Activated CD8-positive, alpha-beta T cell treated with anti-CD3 and anti-CD28 coated beads, Interleukin-2, amount 10 ng/mL, durations not matched to agents 7 days and 5 days (primary cell): ENCODE measurements at regions of chr19 and their contacts with region 1.

Region 1: DNA sequence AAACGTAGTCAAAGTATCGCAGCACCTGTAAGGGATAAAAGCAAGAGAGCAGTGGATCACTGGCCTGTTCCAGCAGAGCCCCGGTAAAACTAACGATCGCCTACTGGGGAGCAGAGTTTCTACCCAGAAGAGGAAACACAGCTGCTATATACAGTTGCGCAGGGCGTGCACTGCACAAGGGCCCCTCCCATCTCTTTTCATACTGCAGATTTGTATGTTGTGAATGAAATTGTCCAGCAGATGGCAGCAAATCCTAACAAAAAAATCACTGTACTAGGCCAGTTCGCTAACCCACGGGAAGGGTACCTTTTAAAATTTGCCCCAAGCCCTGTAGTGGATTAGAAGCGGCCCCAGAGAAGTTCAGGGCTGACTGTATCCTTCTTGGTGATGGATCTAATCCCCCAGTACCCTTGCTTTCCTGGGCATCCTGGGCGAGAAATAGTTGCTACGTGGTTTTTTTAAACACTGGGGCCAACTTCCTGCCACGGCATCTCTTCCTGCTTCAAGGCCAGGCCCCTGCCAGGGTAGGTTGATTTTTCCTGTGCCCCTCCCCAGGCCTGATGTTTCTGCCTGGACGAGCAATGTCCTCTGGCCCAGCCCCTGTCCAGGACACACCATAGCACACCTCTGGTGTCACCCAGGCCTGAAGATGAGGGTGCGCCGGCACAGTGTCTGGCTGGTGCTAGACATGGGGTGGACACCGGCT is 127.0 kb downstream of the IER2 start:
- DNase-seq: peak; percentile 85
- ATAC-seq: peak; percentile 89
- H3K4me3 Mint-ChIP-seq: peak overlapping the region; percentile 57
- H3K27ac Mint-ChIP-seq: peak overlapping the region; percentile 90
- H3K4me1 Mint-ChIP-seq: peaks cover 23% of the 10 kb centered on the region
- H3K27me3 Mint-ChIP-seq: no peaks in the 10 kb centered on the region

Region 2: DNA sequence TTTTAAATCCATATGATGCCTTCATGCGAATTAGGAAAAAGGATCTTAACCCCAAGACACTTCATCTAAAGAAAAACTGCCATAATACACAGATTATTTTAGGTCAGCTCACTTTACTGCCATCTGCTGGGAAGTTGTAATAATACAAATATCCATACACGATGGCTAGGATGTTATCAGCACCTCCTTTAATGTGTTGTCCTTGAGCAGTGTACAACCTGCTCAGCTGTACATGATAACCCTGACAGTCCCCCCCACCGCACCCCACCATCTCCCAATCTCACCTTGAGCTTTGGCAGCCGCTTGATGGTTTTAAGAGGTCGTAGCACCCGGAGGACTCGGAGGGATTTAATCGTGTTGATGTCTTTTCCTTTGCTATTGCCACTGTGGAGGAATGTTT is 14.8 kb before region 1 on chr19:
- CTCF ChIA-PET with region 1: interaction called, 13 read pairs
- POLR2A ChIA-PET with region 1: no interaction called
- DNase-seq: no peak
- ATAC-seq: peak; percentile 57
- H3K4me3 Mint-ChIP-seq: no peak overlapping the region
- H3K27ac Mint-ChIP-seq: no peak overlapping the region
- H3K4me1 Mint-ChIP-seq: peaks cover 16% of the 10 kb centered on the region
- H3K27me3 Mint-ChIP-seq: peaks cover 15% of the 10 kb centered on the region

Region 3: DNA sequence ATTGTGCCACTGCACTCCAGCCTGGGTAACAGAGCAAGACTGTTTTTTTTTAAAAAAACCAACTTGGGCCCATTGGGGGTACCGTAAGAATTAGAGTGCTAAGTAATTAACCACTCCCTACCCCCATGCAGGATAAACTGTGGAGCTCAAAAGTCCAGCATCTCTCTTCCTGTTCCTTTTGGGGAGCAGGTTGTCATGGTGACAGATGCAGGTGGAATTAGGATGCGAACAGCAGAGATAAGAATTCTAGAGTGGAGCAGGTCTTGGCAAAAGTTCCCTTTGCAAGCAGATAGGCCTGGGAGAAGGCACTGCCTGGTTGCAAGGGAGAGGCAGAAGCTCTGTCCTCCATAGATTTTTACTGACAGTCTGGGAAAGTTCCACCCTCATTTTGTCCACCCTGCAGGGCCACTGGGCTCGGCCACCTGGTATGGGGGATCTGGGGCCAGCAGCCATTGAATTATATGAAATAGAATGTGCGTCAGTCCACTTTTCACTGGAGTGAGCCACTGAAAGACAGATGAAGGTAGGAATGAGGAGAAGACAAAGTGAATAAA is 14.6 kb after region 1 on chr19:
- CTCF ChIA-PET with region 1: interaction called, 23 read pairs
- POLR2A ChIA-PET with region 1: interaction called, 3 read pairs
- DNase-seq: no peak
- ATAC-seq: no peak
- H3K4me3 Mint-ChIP-seq: no peak overlapping the region
- H3K27ac Mint-ChIP-seq: no peak overlapping the region
- H3K4me1 Mint-ChIP-seq: no peaks in the 10 kb centered on the region
- H3K27me3 Mint-ChIP-seq: no peaks in the 10 kb centered on the region

Region 4: GRCh38 chr19:13339869-13340268 is 62.6 kb after region 1 on chr19:
- CTCF ChIA-PET with region 1: no interaction called
- POLR2A ChIA-PET with region 1: no interaction called
- DNase-seq: no peak
- ATAC-seq: no peak
- H3K4me3 Mint-ChIP-seq: no peak overlapping the region
- H3K27ac Mint-ChIP-seq: no peak overlapping the region
- H3K4me1 Mint-ChIP-seq: no peaks in the 10 kb centered on the region
- H3K27me3 Mint-ChIP-seq: no peaks in the 10 kb centered on the region

Region 5: DNA sequence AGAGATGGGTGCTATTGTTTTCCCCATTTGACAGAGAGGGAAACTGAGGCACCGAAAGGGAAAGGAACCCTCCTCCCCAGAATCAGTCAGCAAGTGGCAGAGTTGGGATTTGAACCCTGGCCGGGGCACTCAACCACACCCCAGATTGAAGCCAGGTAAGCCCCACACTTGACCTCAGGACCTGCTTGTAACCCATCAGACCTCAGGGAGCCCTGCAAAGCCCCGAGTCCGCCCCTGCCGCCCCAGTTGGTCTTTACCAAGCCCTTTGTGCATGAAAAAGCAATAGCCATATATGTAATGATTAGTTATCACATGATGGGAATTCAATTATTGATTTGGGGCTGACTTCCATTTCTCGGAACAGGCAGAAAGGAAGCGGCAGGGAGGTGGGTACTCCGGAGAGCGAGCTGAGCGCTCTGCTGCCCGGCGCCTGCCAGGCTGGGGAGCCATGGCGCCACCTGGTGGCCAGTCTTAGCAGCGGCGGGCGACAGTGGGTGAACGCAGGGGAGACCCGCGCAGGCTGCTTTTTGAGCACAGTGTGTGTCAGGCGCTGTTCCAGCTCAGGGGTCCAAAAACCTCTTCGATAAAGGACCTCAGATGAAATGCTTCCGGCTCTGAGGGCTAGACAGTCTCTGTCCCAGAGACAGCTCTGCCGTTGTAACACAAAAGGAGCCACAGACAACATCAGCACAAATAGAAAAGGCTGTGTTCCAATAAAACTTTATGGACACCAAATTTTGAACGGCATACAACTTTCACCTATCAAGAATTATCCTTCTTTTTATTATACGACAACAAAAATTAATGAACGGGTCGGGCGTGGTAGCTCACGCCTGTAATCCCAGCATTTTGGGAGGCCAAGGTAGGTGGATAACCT is 311.9 kb after region 1 on chr19:
- CTCF ChIA-PET with region 1: interaction called, 48 read pairs
- POLR2A ChIA-PET with region 1: no interaction called
- DNase-seq: peak; percentile 85
- ATAC-seq: peak; percentile 95
- H3K4me3 Mint-ChIP-seq: no peak overlapping the region
- H3K27ac Mint-ChIP-seq: no peak overlapping the region
- H3K4me1 Mint-ChIP-seq: no peaks in the 10 kb centered on the region
- H3K27me3 Mint-ChIP-seq: peaks cover 3% of the 10 kb centered on the region